ENCODE measurements at regions of chr10 and their contacts with region 1.

Region 1: DNA sequence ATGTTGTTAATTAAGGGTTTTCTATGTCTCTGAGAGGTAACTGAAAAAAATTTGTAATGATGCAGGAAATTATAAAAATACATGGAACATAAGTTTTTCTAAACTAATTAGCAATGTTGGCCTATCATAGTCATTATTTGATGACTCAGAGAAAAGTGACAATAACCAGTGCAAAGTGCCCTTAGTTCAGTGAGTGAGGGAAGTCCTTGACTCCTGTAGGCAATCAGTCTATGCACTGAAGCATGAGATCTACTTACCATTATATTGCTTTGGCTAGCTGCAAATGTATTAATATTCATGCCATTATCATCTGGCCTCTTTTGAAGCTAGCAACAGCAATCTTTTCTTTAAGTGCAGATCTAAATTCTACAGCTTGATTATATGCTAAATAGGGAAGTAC is 40.6 kb downstream of the CCDC172 start:
- DNase-seq: no peak

Region 2: DNA sequence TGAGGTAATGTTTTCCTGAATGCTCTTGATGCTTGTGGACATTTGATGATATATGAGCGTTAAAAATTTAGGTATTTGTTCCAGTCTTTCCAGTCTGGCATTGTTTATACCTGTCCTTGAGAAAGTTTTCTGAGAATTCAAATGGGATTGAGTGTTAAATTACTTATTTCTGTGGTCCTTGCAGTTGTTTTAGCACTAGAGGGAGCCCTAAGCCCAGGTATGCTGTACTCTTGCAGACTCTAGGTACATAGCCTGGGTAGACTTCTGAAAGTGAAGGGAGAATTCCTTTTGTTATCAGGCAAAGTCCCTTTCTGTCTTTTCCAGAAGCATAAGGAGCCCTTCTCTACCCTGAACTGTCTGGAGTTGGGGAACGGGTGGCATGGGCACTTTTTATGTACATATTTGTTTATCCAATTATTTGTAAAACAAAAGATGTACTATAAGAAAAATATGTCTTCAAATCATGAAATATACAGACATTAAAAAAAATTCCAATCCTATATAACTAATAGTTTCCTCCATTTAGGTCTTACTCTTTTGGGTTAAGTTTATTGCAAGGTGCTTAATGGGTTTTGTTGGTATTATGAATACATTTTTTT is 1009.6 kb before region 1 on chr10:
- intact Hi-C with region 1: loop called in 1 of 2 experiments (anchors 5 kb)
- DNase-seq: no peak

Region 3: DNA sequence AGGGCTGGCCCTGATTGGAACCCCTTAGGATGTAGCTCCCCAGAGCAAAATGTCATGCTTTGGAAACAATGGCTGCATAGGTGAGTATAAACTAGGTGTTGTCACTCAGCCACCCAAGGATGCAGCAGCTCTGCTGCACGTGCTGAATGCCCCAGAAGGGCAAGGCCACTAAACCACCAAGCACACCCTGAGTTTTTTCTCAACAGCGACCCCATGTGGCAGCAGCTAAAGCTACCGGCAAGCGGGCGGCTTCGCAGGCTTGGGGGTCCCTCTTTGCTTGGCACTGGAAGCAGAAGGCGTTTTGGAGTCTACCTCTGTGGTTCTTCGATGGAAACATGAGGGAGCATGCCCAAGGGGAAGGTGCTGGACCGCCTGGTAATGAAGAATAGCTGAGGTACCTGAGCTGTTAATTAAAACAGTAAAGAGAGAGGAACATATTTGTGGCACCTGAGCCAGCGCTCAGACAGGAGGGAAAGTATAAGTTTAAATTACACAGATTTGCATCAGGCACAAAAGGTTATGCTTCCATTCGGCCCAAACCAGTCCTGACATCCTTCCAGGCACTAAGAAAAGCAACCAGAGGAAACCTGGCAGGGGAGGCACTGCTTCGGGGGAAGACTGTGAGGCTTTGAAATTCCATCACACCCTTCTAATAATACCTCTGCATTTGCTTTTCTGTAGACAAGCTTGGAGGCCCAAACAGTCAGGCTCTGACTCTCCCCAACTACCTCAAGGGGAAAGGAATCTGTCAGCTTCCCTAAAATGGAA is 244.0 kb before region 1 on chr10:
- intact Hi-C with region 1: no loop called
- DNase-seq: no peak

Measured in posterior vena cava (tissue), 2 donors.